SK-N-SH (cell line): ENCODE measurements at regions of chrX and their contacts with region 1.

Region 1: GRCh38 chrX:16882702-16883486 is 12.7 kb upstream of the RBBP7 start:
- DNase-seq: peak; percentile 70
- H3K4me3 ChIP-seq: peak overlapping the region; percentile 51 to 59
- H3K27ac ChIP-seq: peak overlapping the region; percentile 43 to 85; a peak in 3 of 4 replicates
- H3K4me1 ChIP-seq: peaks cover 0 to 3% of the 10 kb centered on the region in 2 experiments; a peak in 1 of 4 replicates
- H3K27me3 ChIP-seq: no peaks in the 10 kb centered on the region; the same call in 1 of the 2 replicates
- CTCF ChIP-seq: peak; percentile 87
- EP300 ChIP-seq: no peak
- RAD21 ChIP-seq: peak; percentile 71

Region 2: DNA sequence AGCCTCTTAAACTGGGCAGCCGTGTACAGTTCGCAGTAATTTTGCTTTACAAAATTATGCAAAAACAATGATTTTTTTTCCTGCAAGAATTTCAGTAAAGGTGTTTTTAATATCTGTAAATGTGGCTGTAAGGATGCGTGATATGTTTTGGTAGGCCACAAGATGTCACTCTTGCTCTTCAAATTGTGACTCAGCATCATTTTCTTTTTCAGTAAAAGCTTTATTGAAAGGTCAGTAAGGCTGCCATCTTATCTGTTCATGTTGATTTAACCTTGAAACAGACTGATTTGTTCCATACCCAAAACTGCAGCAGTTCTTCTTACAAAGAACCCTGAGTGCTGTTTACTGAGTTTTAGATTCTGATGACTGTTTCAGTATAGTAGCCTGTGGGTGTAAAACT is 56.7 kb before region 1 on chrX:
- CTCF ChIA-PET with region 1: interaction called, 35 read pairs
- POLR2A ChIA-PET with region 1: interaction called, 3 read pairs
- DNase-seq: peak; percentile 44
- H3K4me3 ChIP-seq: no peak overlapping the region
- H3K27ac ChIP-seq: peak overlapping the region; percentile 75 to 81
- H3K4me1 ChIP-seq: peaks cover 11 to 23% of the 10 kb centered on the region in 2 experiments; a peak in 2 of 4 replicates
- H3K27me3 ChIP-seq: no peaks in the 10 kb centered on the region
- CTCF ChIP-seq: peak; percentile 77
- EP300 ChIP-seq: peak in 1 of 2 experiments; percentile 41; a peak in 2 of 4 replicates
- RAD21 ChIP-seq: peak; percentile 87

Region 3: GRCh38 chrX:16855363-16856075 is 27.4 kb before region 1 on chrX:
- CTCF ChIA-PET with region 1: interaction called, 11 read pairs
- POLR2A ChIA-PET with region 1: no interaction called
- DNase-seq: no peak
- H3K4me3 ChIP-seq: no peak overlapping the region
- H3K27ac ChIP-seq: no peak overlapping the region
- H3K4me1 ChIP-seq: no peaks in the 10 kb centered on the region; a peak in 1 of 4 replicates
- H3K27me3 ChIP-seq: no peaks in the 10 kb centered on the region
- CTCF ChIP-seq: no peak
- EP300 ChIP-seq: no peak
- RAD21 ChIP-seq: no peak

Region 4: DNA sequence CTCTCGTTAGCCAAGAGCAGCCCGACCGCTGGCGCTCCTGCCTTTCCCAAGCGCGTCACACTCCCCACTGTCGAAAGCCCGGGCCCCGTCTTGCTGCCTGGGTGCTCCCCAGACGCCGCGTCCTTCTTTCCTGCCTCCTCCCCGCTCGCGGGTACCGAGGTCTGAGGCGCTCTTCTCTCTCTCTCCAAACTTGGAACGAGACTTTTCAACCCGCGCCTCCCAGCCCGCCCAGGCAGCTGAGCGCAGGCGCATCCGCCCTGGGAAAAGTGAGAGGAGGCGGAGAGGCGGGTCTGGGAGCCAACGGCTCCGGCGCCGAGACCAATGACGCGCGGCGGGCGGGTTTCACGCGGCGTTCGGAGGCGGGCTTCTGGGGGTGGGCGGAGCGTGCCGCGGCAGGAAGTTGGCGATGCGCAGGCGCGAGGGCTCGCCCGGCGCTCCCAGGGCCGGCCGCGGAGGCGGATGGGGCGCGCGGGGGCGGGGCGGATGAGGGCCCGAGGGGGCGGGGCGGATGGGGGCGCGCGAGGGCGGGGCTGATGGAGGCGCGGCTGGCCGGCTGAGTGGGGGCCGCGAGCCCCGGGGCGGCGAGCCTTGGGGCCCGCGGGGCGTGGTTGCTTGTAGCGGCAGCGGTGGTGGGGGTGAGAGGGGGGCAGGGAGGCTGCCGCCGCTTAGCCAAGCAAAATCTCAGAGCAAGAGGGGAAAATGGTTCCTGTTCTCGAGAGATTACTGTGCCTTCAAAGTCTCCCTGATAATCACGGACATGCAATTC is 12.6 kb before region 1 on chrX and contains the start of gene RBBP7:
- CTCF ChIA-PET with region 1: interaction called, 37 read pairs
- POLR2A ChIA-PET with region 1: interaction called, 4 read pairs
- DNase-seq: peak; percentile 98
- H3K4me3 ChIP-seq: peak within 1 kb of the TSS; percentile 82 to 88
- H3K27ac ChIP-seq: peak within 1 kb of the TSS; percentile 91 to 97
- H3K4me1 ChIP-seq: peaks cover 7 to 11% of the 10 kb centered on the region in 2 experiments; a peak in 3 of 4 replicates
- H3K27me3 ChIP-seq: peaks cover 14% of the 10 kb centered on the region; the same call in 1 of the 2 replicates
- CTCF ChIP-seq: no peak
- EP300 ChIP-seq: no peak
- RAD21 ChIP-seq: no peak
- polyA plus RNA-seq, gene RBBP7: 172 and 198 TPM in 2 replicates

Region 5: DNA sequence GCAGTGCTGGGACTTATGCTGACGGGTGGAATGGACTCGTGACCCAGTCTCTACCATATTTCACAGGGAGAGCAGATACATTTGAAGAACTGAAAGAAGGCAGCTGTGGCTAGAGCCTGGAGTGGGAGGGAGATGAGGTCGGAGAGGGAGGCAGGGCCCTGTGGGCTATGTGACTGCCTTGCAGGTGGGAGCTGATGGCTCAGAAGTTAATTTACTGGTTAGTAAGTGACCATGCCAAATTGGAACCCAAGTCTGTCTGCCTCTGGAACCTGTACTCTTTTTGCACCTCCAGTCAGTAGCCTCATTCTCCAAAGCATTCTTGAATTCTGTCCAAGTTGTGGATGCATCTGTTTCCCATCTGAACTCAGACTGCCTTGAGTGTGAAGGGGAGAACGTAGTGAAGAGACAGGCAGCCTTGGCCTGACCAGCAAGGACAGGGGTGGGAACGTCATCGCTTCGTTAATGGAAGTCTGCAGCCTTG is 155.8 kb after region 1 on chrX:
- CTCF ChIA-PET with region 1: interaction called, 11 read pairs
- POLR2A ChIA-PET with region 1: no interaction called
- DNase-seq: peak; percentile 6
- H3K4me3 ChIP-seq: no peak overlapping the region
- H3K27ac ChIP-seq: peak overlapping the region in 1 of 2 experiments; percentile 58; a peak in 1 of 4 replicates
- H3K4me1 ChIP-seq: peaks cover 0 to 9% of the 10 kb centered on the region in 2 experiments; a peak in 2 of 4 replicates
- H3K27me3 ChIP-seq: peaks cover 5% of the 10 kb centered on the region; the same call in 1 of the 2 replicates
- CTCF ChIP-seq: no peak
- EP300 ChIP-seq: peak in 1 of 2 experiments; percentile 32; a peak in 1 of 4 replicates
- RAD21 ChIP-seq: no peak

Region 6: DNA sequence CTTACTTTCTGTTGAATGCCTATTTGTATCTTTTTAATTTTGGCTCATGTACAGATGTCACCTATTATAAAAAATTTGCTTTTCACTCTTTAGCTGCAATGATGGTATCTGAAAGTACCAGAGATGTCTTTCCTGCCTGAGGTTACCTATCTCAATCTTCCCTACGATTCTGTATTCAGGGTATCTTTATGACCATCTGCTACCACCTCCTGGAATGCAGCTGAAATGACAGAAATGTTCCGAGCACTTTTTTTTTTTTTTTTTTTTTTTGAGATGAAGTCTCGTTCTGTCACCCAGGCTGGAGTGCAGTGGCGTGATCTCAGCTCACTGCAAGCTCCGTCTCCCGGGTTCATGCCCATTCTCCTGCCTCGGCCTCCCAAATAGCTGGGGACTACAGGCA is 199.9 kb after region 1 on chrX:
- CTCF ChIA-PET with region 1: interaction called, 13 read pairs
- POLR2A ChIA-PET with region 1: no interaction called
- DNase-seq: peak; percentile 37
- H3K4me3 ChIP-seq: no peak overlapping the region
- H3K27ac ChIP-seq: no peak overlapping the region
- H3K4me1 ChIP-seq: peaks cover 4 to 10% of the 10 kb centered on the region in 2 experiments; a peak in 2 of 4 replicates
- H3K27me3 ChIP-seq: no peaks in the 10 kb centered on the region
- CTCF ChIP-seq: peak; percentile 53
- EP300 ChIP-seq: no peak
- RAD21 ChIP-seq: peak; percentile 64